Activated CD8-positive, alpha-beta memory T cell treated with anti-CD3 and anti-CD28 coated beads, Interleukin-2, amount 10 ng/mL, durations not matched to agents 7 days and 5 days (primary cell): ENCODE measurements at regions of chr6 and their contacts with region 1.

Region 1: GRCh38 chr6:107731422-107732319 is 92.4 kb downstream of the SCML4 start:
- DNase-seq: peak; percentile 61
- ATAC-seq: peak; percentile 21
- H3K4me3 Mint-ChIP-seq: peak overlapping the region; percentile 90
- H3K27ac Mint-ChIP-seq: peak overlapping the region; percentile 85
- H3K4me1 Mint-ChIP-seq: peaks cover 77% of the 10 kb centered on the region
- H3K27me3 Mint-ChIP-seq: no peaks in the 10 kb centered on the region

Region 2: DNA sequence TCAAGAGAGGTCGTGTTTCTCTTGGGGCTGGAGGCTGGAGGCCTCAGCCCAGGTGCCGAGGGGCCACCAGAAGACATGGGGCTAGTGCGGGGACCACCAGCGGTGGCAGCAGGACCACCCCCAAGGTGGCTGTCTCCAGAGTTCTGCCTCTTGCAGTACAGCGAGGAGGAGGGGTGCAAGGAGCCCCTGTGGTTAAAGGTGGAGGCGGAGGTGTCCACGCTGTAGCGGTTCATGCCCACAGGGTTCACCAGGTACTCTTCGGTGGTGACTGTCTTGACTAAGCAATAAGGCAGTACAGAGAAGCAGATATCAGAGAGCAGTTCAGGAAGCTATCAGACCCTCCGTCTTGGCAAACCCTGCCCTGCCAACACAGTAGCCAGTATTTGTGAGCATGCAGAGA is 11.0 kb before region 1 on chr6:
- CTCF ChIA-PET with region 1: interaction called, 13 read pairs
- DNase-seq: no peak
- ATAC-seq: no peak
- H3K4me3 Mint-ChIP-seq: no peak overlapping the region
- H3K27ac Mint-ChIP-seq: no peak overlapping the region
- H3K4me1 Mint-ChIP-seq: peaks cover 51% of the 10 kb centered on the region
- H3K27me3 Mint-ChIP-seq: peaks cover 12% of the 10 kb centered on the region

Region 3: DNA sequence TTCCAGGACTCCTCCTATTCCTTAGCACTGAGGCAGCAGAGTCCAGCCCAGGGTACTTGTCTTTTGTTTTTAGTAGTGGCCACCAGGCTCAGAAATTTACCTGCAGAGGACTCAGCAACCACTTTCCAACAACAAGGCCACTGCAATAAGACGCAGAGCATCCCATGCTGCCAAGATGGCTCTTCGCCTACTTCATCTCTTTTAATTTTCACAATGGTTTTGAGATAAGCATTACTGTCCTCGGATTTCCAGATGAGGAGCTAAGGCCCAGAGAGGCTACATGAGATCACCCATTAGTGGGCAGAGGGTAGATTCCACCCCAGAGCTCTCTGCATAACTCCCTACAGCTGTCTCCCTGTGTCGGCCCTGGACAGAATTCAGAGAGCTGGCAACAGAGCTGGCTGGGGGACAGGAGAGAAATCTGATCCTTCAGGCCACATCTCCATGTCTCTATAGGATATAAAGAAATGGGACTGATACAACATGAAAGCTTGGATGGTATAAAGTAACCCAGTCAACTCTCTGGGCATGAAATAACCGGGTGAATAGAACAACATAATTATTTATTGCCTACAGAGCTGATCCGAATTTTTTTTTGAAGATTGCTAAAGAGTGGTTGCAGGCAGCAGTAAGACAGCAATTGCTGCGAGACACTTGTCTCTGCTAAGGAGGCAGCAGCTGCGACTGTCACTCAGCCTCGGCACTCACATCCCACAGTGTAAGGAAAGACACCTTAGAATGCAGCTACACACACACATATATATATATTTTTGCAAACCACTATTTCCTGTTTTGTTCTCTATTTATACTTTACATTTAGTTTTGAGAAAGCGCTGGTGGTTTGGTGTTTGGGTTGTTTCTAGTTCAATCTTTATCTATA is 55.3 kb after region 1 on chr6:
- CTCF ChIA-PET with region 1: interaction called, 12 read pairs
- DNase-seq: peak; percentile 79
- ATAC-seq: peak; percentile 89
- H3K4me3 Mint-ChIP-seq: peak overlapping the region; percentile 65
- H3K27ac Mint-ChIP-seq: peak overlapping the region; percentile 86
- H3K4me1 Mint-ChIP-seq: peaks cover 54% of the 10 kb centered on the region
- H3K27me3 Mint-ChIP-seq: no peaks in the 10 kb centered on the region

Region 4: GRCh38 chr6:107820338-107821261 is 88.9 kb after region 1 on chr6:
- CTCF ChIA-PET with region 1: interaction called, 20 read pairs
- DNase-seq: peak; percentile 66
- ATAC-seq: peak; percentile 2
- H3K4me3 Mint-ChIP-seq: peak overlapping the region; percentile 84
- H3K27ac Mint-ChIP-seq: peak overlapping the region; percentile 98
- H3K4me1 Mint-ChIP-seq: peaks cover 76% of the 10 kb centered on the region
- H3K27me3 Mint-ChIP-seq: no peaks in the 10 kb centered on the region

Region 5: DNA sequence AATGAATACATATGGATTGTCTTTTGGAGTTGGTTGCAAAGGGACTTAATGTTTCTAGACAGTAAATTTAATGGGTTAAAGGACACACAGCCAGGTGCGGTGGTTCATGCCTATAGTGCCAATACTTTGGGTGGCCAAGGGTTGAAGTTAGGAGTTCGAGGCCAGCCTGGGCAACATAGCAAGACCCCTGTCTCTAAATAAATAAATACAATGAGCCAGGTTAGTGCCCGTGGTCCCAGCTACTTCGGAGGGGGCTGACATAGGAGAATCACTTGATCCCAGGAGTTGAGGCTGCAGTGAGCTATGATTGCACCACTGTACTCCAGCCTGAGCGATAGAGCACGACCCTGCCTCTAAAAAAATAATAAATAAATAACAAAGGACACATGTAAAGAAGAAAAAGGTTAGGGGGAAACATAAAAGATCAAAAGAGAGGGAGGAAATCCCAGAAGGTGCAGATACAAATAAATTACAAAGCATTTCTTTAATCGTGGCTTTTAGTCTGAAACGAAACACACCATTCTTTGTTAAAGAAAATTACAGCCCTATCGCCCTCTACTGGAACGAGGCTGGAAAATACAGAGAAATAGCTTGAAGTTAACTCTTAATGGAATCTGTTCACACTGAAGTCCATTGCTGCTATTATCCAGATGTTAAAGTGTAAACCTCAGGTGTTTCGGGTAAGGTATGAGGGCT is 135.1 kb after region 1 on chr6:
- CTCF ChIA-PET with region 1: interaction called, 40 read pairs
- DNase-seq: peak; percentile 51
- ATAC-seq: peak; percentile 61
- H3K4me3 Mint-ChIP-seq: no peak overlapping the region
- H3K27ac Mint-ChIP-seq: peak overlapping the region; percentile 5
- H3K4me1 Mint-ChIP-seq: peaks cover 4% of the 10 kb centered on the region
- H3K27me3 Mint-ChIP-seq: no peaks in the 10 kb centered on the region